B cell (primary cell): ENCODE measurements at regions of chr12 and their contacts with region 1.

Region 1: GRCh38 chr12:54032627-54033100 is at the start of gene HOXC5:
- DNase-seq: peak; percentile 79
- ATAC-seq: peak; percentile 65
- H3K4me3 ChIP-seq: peak within 1 kb of the TSS in 3 of 5 experiments; percentile 13 to 47 (median 36)
- H3K4me3 Mint-ChIP-seq: peak within 1 kb of the TSS; percentile 71
- H3K27ac ChIP-seq: no peak within 1 kb of the TSS
- H3K27ac Mint-ChIP-seq: peak within 1 kb of the TSS; percentile 41
- H3K4me1 ChIP-seq: peaks cover 28 to 51% of the 10 kb centered on the region in 2 donors
- H3K4me1 Mint-ChIP-seq: peaks cover 29% of the 10 kb centered on the region
- H3K27me3 ChIP-seq: peaks cover 0 to 96% (median 73%) of the 10 kb centered on the region in 4 experiments
- H3K27me3 Mint-ChIP-seq: peaks cover 73% of the 10 kb centered on the region
- CTCF ChIP-seq: peak; percentile 93
- total RNA-seq, gene HOXC5: not detected in 2 replicates

Region 2: GRCh38 chr12:53995378-53996239 is 37.1 kb before region 1 on chr12:
- CTCF ChIA-PET with region 1: interaction called, 5 read pairs
- POLR2A ChIA-PET with region 1: no interaction called
- intact Hi-C with region 1: loop called (anchors 5 kb)
- DNase-seq: peak; percentile 62
- ATAC-seq: peak; percentile 43
- H3K4me3 ChIP-seq: peak overlapping the region in 4 of 5 experiments; percentile 44 to 60 (median 58)
- H3K4me3 Mint-ChIP-seq: peak overlapping the region; percentile 89
- H3K27ac ChIP-seq: no peak overlapping the region
- H3K27ac Mint-ChIP-seq: peak overlapping the region; percentile 47
- H3K4me1 ChIP-seq: peaks cover 37 to 70% of the 10 kb centered on the region in 2 donors
- H3K4me1 Mint-ChIP-seq: peaks cover 35% of the 10 kb centered on the region
- H3K27me3 ChIP-seq: peaks cover 0 to 98% (median 84%) of the 10 kb centered on the region in 4 experiments
- H3K27me3 Mint-ChIP-seq: peaks cover 87% of the 10 kb centered on the region
- CTCF ChIP-seq: no peak

Region 3: GRCh38 chr12:54053751-54054741 is 21.4 kb after region 1 on chr12 and contains the start of gene HOXC4:
- CTCF ChIA-PET with region 1: interaction called, 37 read pairs
- POLR2A ChIA-PET with region 1: interaction called, 8 read pairs
- intact Hi-C with region 1: loop called (anchors 2 kb)
- DNase-seq: peak; percentile 36
- ATAC-seq: peak; percentile 66
- H3K4me3 ChIP-seq: peak within 1 kb of the TSS in 4 of 5 experiments; percentile 69 to 78 (median 75)
- H3K4me3 Mint-ChIP-seq: peak within 1 kb of the TSS; percentile 91
- H3K27ac ChIP-seq: peak within 1 kb of the TSS; percentile 83 to 88
- H3K27ac Mint-ChIP-seq: peak within 1 kb of the TSS; percentile 95
- H3K4me1 ChIP-seq: peaks cover 36 to 42% of the 10 kb centered on the region in 2 donors
- H3K4me1 Mint-ChIP-seq: peaks cover 43% of the 10 kb centered on the region
- H3K27me3 ChIP-seq: peaks cover 0 to 63% (median 39%) of the 10 kb centered on the region in 4 experiments
- H3K27me3 Mint-ChIP-seq: peaks cover 56% of the 10 kb centered on the region
- CTCF ChIP-seq: no peak
- total RNA-seq, gene HOXC4: 6.4 and 6.5 TPM in 2 replicates

Region 4: GRCh38 chr12:54191550-54192022 is 158.9 kb after region 1 on chr12:
- CTCF ChIA-PET with region 1: interaction called, 151 read pairs
- POLR2A ChIA-PET with region 1: interaction called, 5 read pairs
- intact Hi-C with region 1: loop called (anchors 1 kb)
- DNase-seq: peak; percentile 90
- ATAC-seq: peak; percentile 64
- H3K4me3 ChIP-seq: no peak overlapping the region
- H3K4me3 Mint-ChIP-seq: no peak overlapping the region
- H3K27ac ChIP-seq: no peak overlapping the region
- H3K27ac Mint-ChIP-seq: peak overlapping the region; percentile 61
- H3K4me1 ChIP-seq: peaks cover 27 to 42% of the 10 kb centered on the region in 2 donors
- H3K4me1 Mint-ChIP-seq: peaks cover 41% of the 10 kb centered on the region
- H3K27me3 ChIP-seq: peaks cover 0 to 42% (median 12%) of the 10 kb centered on the region in 4 experiments
- H3K27me3 Mint-ChIP-seq: peaks cover 35% of the 10 kb centered on the region
- CTCF ChIP-seq: peak; percentile 77

Region 5: GRCh38 chr12:54207484-54208294 is 175.0 kb after region 1 on chr12:
- CTCF ChIA-PET with region 1: interaction called, 87 read pairs
- POLR2A ChIA-PET with region 1: interaction called, 3 read pairs
- intact Hi-C with region 1: loop called (anchors 1 kb)
- DNase-seq: peak; percentile 82
- ATAC-seq: peak; percentile 99
- H3K4me3 ChIP-seq: no peak overlapping the region
- H3K4me3 Mint-ChIP-seq: no peak overlapping the region
- H3K27ac ChIP-seq: no peak overlapping the region
- H3K27ac Mint-ChIP-seq: peak overlapping the region; percentile 67
- H3K4me1 ChIP-seq: peaks cover 0 to 4% of the 10 kb centered on the region in 2 donors
- H3K4me1 Mint-ChIP-seq: peaks cover 4% of the 10 kb centered on the region
- H3K27me3 ChIP-seq: peaks cover 0 to 70% (median 6%) of the 10 kb centered on the region in 4 experiments
- H3K27me3 Mint-ChIP-seq: peaks cover 44% of the 10 kb centered on the region
- CTCF ChIP-seq: peak; percentile 95

Region 6: GRCh38 chr12:54560374-54560858 is 527.8 kb after region 1 on chr12:
- CTCF ChIA-PET with region 1: no interaction called
- POLR2A ChIA-PET with region 1: no interaction called
- intact Hi-C with region 1: no loop called
- DNase-seq: peak; percentile 88
- ATAC-seq: peak; percentile 100
- H3K4me3 ChIP-seq: peak overlapping the region; percentile 56 to 75 (median 70)
- H3K4me3 Mint-ChIP-seq: peak overlapping the region; percentile 94
- H3K27ac ChIP-seq: peak overlapping the region; percentile 50 to 56
- H3K27ac Mint-ChIP-seq: peak overlapping the region; percentile 80
- H3K4me1 ChIP-seq: peaks cover 13 to 19% of the 10 kb centered on the region in 2 donors
- H3K4me1 Mint-ChIP-seq: peaks cover 24% of the 10 kb centered on the region
- H3K27me3 ChIP-seq: no peaks in the 10 kb centered on the region
- H3K27me3 Mint-ChIP-seq: no peaks in the 10 kb centered on the region
- CTCF ChIP-seq: no peak